Panc1 (cell line): ENCODE measurements at regions of chr19 and their contacts with region 1.

Region 1: DNA sequence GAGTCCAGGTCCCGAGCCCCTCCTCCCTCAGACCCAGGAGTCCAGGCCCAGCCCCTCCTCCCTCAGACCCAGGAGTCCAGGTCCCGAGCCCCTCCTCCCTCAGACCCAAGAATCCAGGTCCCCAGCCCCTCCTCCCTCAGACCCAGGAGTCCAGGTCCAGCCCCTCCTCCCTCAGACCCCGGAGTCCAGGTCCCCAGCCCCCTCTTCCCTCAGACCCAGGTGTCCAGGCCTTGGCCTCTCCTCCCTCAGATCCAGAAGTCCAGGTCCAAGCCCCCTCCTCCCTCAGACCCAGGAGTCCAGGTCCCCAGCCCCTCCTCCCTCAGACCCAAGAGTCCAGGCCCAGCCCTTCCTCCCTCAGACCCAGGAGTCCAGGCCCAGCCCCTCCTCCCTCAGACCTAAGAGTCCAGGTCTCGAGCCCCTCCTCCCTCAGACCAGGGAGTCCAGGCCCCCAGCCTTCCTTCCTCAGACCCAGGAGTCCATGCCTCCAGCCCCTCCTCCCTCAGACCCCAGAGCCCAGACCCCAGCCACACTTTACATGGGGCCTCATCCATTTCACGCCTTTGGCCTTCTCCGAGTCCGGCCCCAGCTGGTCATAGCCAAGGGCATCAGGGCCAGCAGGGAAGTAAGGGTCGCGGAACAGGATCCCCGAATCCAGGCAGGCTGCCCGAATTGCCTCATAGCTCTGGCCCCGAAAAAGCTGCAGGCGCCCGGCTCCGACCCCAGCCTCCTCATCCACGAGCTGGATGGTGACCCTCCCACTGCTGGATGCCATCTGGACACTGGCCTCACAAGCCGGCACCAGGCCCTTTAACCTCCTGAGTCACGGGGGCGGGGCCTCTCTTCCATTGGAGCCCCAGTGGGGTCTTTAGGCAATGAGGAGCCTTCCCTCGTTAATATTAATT is 629 bp downstream of the CAPN12 start:
- DNase-seq: no peak
- ATAC-seq: peak; percentile 4; the same call in 1 of the 2 replicates
- H3K4me3 ChIP-seq: no peak overlapping the region
- H3K27ac ChIP-seq: no peak overlapping the region
- H3K4me1 ChIP-seq: 0 out of 2 replicates have a peak, but pooled peaks cover 4% of the 10 kb centered on the region
- H3K27me3 ChIP-seq: no peaks in the 10 kb centered on the region
- CTCF ChIP-seq: no peak

Region 2: DNA sequence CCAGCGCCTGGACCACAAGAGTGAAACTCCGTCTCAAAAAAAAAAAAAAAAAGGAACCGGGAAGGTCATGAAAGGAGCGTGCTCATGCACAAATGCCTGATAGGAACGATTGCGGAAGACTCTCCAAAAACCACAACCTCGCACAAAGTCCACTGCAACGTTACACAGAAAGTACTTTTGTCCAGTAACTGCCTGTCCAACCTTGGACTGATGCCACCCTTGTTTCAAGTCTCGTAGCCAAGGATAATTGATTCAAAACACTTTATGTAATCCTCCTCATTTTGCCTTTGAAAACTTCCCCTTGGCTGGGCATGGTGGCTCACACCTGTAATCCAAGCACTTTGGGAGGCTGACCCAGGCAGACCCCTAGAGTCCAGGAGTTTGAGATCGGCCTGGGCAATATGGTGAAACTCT is 16.0 kb after region 1 on chr19:
- CTCF ChIA-PET with region 1: interaction called, 3 read pairs
- POLR2A ChIA-PET with region 1: interaction called, 11 read pairs
- in situ Hi-C with region 1: no loop called
- intact Hi-C with region 1: no loop called
- DNase-seq: no peak
- ATAC-seq: no peak
- H3K4me3 ChIP-seq: no peak overlapping the region
- H3K27ac ChIP-seq: no peak overlapping the region
- H3K4me1 ChIP-seq: no peaks in the 10 kb centered on the region
- H3K27me3 ChIP-seq: no peaks in the 10 kb centered on the region
- CTCF ChIP-seq: no peak

Region 3: GRCh38 chr19:39144245-39145071 is 400.8 kb after region 1 on chr19:
- CTCF ChIA-PET with region 1: no interaction called
- POLR2A ChIA-PET with region 1: interaction called, 15 read pairs
- in situ Hi-C with region 1: no loop called
- intact Hi-C with region 1: no loop called
- DNase-seq: no peak
- ATAC-seq: peak; percentile 64
- H3K4me3 ChIP-seq: no peak overlapping the region
- H3K27ac ChIP-seq: peak overlapping the region; percentile 0; the same call in 1 of the 2 replicates
- H3K4me1 ChIP-seq: peaks cover 31% of the 10 kb centered on the region
- H3K27me3 ChIP-seq: no peaks in the 10 kb centered on the region
- CTCF ChIP-seq: no peak

Region 4: DNA sequence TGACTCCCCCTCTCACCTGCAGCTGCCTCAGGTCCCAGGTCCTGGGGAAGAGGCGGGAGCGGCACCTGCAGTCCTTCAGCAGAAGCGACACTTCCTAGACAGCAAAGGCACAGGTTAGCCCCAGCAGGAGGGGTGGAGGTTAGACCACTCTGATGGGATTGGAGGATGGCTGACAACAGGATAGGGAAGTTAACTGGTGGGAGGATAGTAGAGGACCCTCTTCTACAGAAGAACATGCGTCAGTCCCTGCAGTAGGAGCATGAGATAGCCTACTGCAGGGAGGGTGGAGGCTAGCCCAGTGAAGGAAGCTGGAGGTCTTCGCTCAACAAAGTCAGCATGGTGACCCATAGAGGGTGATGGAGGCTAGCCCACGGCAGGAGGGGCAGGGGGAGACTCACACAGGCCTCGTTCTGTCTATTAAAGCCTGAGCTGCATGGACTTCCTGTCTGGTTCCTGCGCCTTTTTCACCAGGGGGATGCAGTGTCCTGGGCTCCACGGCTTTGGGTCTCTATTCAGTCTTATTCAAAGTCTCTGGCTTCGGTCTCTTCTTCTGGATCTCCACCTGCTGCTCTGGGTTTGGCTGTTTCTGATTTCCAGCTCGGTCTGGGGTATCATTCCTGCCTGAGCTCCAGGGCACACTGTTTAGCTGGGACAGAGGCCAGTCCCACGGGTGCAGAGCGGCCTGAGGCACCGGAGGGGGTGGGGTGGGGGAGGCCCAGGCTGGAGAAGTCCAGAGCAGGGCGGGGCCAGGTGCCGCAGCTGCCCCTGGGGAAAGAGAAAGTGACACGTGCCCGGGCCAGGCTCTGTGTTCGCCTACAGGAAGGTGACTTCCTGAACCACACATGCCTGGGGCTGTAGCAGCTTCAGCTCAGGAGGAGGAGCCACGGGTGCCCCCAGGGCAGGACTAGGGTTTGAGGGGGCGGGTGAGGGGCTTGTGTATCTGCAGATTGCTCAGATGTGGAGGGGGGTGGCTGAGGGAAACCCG is 493.8 kb after region 1 on chr19:
- CTCF ChIA-PET with region 1: no interaction called
- POLR2A ChIA-PET with region 1: no interaction called
- in situ Hi-C with region 1: no loop called
- intact Hi-C with region 1: no loop called
- DNase-seq: no peak
- ATAC-seq: peak; percentile 73
- H3K4me3 ChIP-seq: peak overlapping the region in 1 of 2 experiments; percentile 23; a peak in 2 of 4 replicates
- H3K27ac ChIP-seq: no peak overlapping the region
- H3K4me1 ChIP-seq: no peaks in the 10 kb centered on the region
- H3K27me3 ChIP-seq: no peaks in the 10 kb centered on the region
- CTCF ChIP-seq: no peak

Region 5: GRCh38 chr19:39406656-39407393 is 663.2 kb after region 1 on chr19 and contains the start of gene ZFP36:
- CTCF ChIA-PET with region 1: no interaction called
- POLR2A ChIA-PET with region 1: interaction called, 13 read pairs
- in situ Hi-C with region 1: no loop called
- intact Hi-C with region 1: no loop called
- DNase-seq: peak; percentile 100
- ATAC-seq: peak; percentile 37
- H3K4me3 ChIP-seq: peak within 1 kb of the TSS; percentile 42 to 55
- H3K27ac ChIP-seq: peak within 1 kb of the TSS; percentile 92
- H3K4me1 ChIP-seq: peaks cover 76% of the 10 kb centered on the region
- H3K27me3 ChIP-seq: no peaks in the 10 kb centered on the region
- CTCF ChIP-seq: no peak
- total RNA-seq, gene ZFP36: 414 TPM